IMR-90 (cell line): ENCODE measurements at regions of chr2 and their contacts with region 1.

Region 1: GRCh38 chr2:143475041-143475776 is 346.0 kb downstream of the ARHGAP15 start:
- DNase-seq: peak; percentile 24
- ATAC-seq: no peak
- H3K4me3 ChIP-seq: no peak overlapping the region
- H3K27ac ChIP-seq: peak overlapping the region; percentile 13; the same call in 1 of the 2 replicates
- H3K4me1 ChIP-seq: peaks cover 10% of the 10 kb centered on the region
- H3K27me3 ChIP-seq: no peaks in the 10 kb centered on the region
- CTCF ChIP-seq: no peak
- POLR2A ChIP-seq: no peak
- RAD21 ChIP-seq: no peak

Region 2: GRCh38 chr2:143451642-143452281 is 23.4 kb before region 1 on chr2:
- CTCF ChIA-PET with region 1: no interaction called
- POLR2A ChIA-PET with region 1: no interaction called
- dilution Hi-C with region 1: no loop called
- in situ Hi-C with region 1: no loop called
- intact Hi-C with region 1: no loop called
- DNase-seq: peak; percentile 41
- ATAC-seq: no peak
- H3K4me3 ChIP-seq: no peak overlapping the region
- H3K27ac ChIP-seq: no peak overlapping the region
- H3K4me1 ChIP-seq: no peaks in the 10 kb centered on the region
- H3K27me3 ChIP-seq: no peaks in the 10 kb centered on the region
- CTCF ChIP-seq: no peak
- POLR2A ChIP-seq: no peak
- RAD21 ChIP-seq: no peak

Region 3: DNA sequence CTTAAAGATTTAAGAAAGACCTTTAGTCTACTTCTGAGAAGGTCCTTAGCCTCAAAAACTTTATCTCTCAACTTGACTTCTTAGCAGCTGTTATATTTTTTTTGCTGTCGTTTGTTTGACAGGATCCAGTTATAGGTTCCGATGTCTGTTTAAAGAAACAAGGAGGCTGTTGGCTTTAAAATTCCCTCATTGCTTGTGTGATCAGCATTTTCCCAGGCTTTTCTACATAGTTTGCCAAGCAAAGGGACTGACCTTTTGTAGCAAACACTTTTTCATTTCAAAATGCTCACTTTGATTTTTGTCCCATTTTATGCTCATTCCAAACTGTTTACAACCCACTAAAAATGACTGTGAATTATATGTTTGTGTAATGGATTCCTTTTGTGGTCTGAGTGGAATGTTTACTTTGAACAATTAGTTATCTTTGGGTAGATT is 48.9 kb after region 1 on chr2:
- CTCF ChIA-PET with region 1: no interaction called
- POLR2A ChIA-PET with region 1: no interaction called
- dilution Hi-C with region 1: no loop called
- in situ Hi-C with region 1: no loop called
- intact Hi-C with region 1: loop called (anchors 2 kb)
- DNase-seq: peak; percentile 54
- ATAC-seq: peak; percentile 72
- H3K4me3 ChIP-seq: no peak overlapping the region
- H3K27ac ChIP-seq: peak overlapping the region; percentile 73; the same call in 1 of the 2 replicates
- H3K4me1 ChIP-seq: peaks cover 9% of the 10 kb centered on the region
- H3K27me3 ChIP-seq: no peaks in the 10 kb centered on the region
- CTCF ChIP-seq: no peak
- POLR2A ChIP-seq: no peak
- RAD21 ChIP-seq: no peak